ENCODE measurements at regions of chrX and their contacts with region 1.

Region 1: GRCh38 chrX:12894074-12895030 is 12.1 kb upstream of the TLR8 start:
- DNase-seq: peak; percentile 57 to 63
- H3K4me3 ChIP-seq: no peak overlapping the region
- H3K27ac ChIP-seq: no peak overlapping the region
- H3K4me1 ChIP-seq: no peaks in the 10 kb centered on the region
- H3K27me3 ChIP-seq: no peaks in the 10 kb centered on the region
- CTCF ChIP-seq: peak in 5 of 7 experiments; percentile 27 to 61 (median 38)
- EP300 ChIP-seq: no peak
- POLR2A ChIP-seq: no peak

Region 2: DNA sequence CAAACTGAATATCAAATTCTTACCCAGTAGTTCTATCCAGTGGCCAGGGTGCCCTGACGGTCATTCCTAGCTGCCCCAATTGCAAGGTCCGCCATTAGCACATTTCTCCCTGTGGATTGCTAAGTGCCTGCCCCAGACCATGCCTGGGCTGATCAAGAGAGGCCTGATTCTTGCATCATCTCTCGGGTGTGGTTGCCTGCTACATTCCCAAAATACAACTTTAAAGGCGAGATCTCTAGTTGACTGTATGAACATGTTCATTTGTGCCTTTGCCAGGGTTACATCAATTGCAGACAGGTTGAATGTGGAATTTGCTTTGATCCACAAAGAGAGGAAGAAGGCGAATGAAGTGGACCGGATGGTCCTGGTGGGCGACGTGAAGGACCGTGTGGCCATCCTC is 75.1 kb before region 1 on chrX:
- intact Hi-C with region 1: loop called (anchors 5 kb)
- DNase-seq: no peak
- H3K4me3 ChIP-seq: no peak overlapping the region
- H3K27ac ChIP-seq: no peak overlapping the region
- H3K4me1 ChIP-seq: no peaks in the 10 kb centered on the region
- H3K27me3 ChIP-seq: peaks cover 0 to 5% (median 0%) of the 10 kb centered on the region in 3 donors
- CTCF ChIP-seq: no peak
- EP300 ChIP-seq: no peak
- POLR2A ChIP-seq: no peak

Region 3: GRCh38 chrX:13029341-13029740 is 135.0 kb after region 1 on chrX:
- intact Hi-C with region 1: no loop called
- DNase-seq: peak; percentile 71 to 74
- H3K4me3 ChIP-seq: no peak overlapping the region
- H3K27ac ChIP-seq: peak overlapping the region; percentile 60 to 81 (median 73)
- H3K4me1 ChIP-seq: peaks cover 0 to 27% (median 20%) of the 10 kb centered on the region in 4 donors
- H3K27me3 ChIP-seq: no peaks in the 10 kb centered on the region
- CTCF ChIP-seq: no peak
- EP300 ChIP-seq: no peak
- POLR2A ChIP-seq: no peak